ENCODE measurements at regions of chr14 and their contacts with region 1.

Region 1: GRCh38 chr14:22047115-22047514 is 373.5 kb upstream of the OR4E1 start:
- DNase-seq: peak; percentile 35
- H3K4me3 Mint-ChIP-seq: peak overlapping the region; percentile 45
- H3K27ac Mint-ChIP-seq: peak overlapping the region; percentile 76
- H3K4me1 Mint-ChIP-seq: peaks cover 30% of the 10 kb centered on the region
- H3K27me3 Mint-ChIP-seq: no peaks in the 10 kb centered on the region

Region 2: GRCh38 chr14:22070119-22071011 is 23.2 kb after region 1 on chr14:
- CTCF ChIA-PET with region 1: interaction called, 11 read pairs
- POLR2A ChIA-PET with region 1: interaction called, 8 read pairs
- intact Hi-C with region 1: loop called (anchors 2 kb)
- DNase-seq: peak; percentile 67
- H3K4me3 Mint-ChIP-seq: peak overlapping the region; percentile 88
- H3K27ac Mint-ChIP-seq: peak overlapping the region; percentile 90
- H3K4me1 Mint-ChIP-seq: peaks cover 33% of the 10 kb centered on the region
- H3K27me3 Mint-ChIP-seq: no peaks in the 10 kb centered on the region

Region 3: DNA sequence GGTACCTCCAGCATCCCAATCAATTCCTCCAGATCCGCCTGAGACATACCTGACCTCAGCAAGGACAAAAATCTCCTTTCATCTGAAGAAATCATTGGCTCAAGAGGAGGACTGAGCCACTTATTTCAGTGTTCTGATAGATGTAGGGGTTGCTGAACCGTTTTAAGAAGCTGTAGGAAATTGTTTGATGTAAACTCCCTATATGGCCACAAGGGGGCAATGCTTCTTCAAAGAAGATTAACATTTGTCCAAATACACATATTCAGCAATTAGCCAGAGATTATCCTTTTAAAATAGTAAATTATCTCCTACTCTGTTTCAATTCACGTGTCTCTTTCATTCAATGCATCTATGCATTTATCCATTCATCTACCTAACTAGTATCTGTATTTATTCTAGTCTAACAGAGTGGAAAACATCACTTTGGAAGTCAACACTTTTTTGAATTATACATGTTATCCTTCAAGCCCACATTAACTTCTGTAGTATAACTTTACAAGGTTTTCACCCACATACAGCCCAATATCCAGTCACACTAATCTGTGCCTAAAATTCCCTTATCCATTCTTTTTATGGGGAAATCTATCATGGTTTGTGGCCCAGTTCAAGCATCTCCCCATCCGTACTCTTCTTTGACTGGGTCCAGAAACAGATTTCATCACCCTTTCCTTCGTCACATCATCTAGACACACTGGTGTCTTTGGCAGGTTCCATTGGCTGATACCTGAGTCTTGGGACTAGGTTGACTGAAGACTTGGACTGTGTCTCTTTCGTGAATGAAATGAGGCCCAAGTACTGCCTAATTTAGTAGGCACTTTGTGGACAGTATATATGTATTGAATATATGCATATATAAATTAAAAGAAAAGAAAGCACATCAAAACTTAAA is 37.5 kb after region 1 on chr14:
- CTCF ChIA-PET with region 1: interaction called, 5 read pairs
- POLR2A ChIA-PET with region 1: no interaction called
- intact Hi-C with region 1: loop called (anchors 5 kb)
- DNase-seq: no peak
- H3K4me3 Mint-ChIP-seq: peak overlapping the region; percentile 56
- H3K27ac Mint-ChIP-seq: peak overlapping the region; percentile 72
- H3K4me1 Mint-ChIP-seq: peaks cover 22% of the 10 kb centered on the region
- H3K27me3 Mint-ChIP-seq: no peaks in the 10 kb centered on the region

Region 4: DNA sequence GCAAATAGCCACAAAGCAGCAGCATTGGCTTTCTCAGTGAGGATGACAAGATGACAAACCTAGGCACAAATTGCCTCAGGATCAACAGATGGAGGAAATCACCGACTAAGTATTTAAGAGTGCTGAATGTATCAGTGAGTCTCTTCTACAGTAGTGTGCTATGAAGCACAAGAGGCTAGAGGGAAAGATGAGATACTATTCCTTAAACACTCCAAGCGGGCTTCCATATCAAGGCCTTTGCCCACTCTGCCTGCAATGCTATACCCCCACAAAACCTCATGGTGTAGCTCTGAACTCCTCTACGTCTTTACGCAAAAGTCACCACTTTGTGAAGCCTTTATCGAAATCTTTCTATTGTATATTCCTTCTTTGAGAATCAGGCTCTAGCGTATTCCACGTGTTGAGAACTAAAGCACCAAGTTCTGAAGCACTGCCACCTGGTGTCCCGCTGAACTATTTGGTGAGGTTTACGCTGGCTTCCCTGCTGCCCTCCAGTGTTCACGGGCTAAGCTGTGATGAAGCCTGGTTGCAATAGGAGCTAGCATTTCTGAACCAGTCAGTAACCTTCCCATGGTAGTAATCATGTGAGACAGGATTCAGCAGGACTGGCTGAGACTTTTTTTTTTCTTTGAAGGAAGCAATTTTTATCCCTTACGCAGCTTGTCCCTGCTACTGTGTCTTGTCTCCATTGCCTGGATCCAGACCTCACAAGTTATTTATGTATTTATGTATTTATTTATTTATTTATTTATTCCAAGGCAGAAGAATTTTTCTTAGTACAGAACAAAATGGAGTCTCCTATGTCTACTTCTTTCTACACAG is 53.0 kb after region 1 on chr14:
- CTCF ChIA-PET with region 1: interaction called, 9 read pairs
- POLR2A ChIA-PET with region 1: no interaction called
- intact Hi-C with region 1: loop called (anchors 2 kb)
- DNase-seq: peak; percentile 72
- H3K4me3 Mint-ChIP-seq: no peak overlapping the region
- H3K27ac Mint-ChIP-seq: no peak overlapping the region
- H3K4me1 Mint-ChIP-seq: peaks cover 41% of the 10 kb centered on the region
- H3K27me3 Mint-ChIP-seq: no peaks in the 10 kb centered on the region

Region 5: DNA sequence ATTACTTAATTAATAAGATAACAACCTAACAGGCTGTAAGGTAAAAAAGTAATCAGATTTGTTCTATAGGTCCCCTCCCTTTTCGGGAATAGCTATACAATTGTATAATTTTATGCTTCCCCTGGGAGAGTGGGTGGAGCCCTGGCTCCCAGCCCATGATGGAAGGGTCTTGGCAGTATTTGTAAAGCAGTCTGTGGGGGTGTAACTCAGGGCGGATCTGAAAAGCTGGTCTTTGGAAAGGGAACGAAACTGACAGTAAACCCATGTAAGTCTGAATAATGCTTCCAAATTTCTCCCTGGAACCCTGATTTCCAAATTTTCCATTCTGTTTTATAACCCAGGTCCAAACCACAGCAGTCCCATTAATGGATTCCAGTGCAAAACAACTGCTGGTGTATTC is 431.6 kb after region 1 on chr14:
- CTCF ChIA-PET with region 1: no interaction called
- POLR2A ChIA-PET with region 1: no interaction called
- intact Hi-C with region 1: no loop called
- DNase-seq: no peak
- H3K4me3 Mint-ChIP-seq: peak overlapping the region; percentile 74
- H3K27ac Mint-ChIP-seq: peak overlapping the region; percentile 98
- H3K4me1 Mint-ChIP-seq: no peaks in the 10 kb centered on the region
- H3K27me3 Mint-ChIP-seq: no peaks in the 10 kb centered on the region

Measured in activated CD4-positive, alpha-beta memory T cell treated with anti-CD3 and anti-CD28 coated beads for 36 hours (primary cell).